ENCODE measurements at regions of chr16 and their contacts with region 1.

Region 1: GRCh38 chr16:88662843-88663606 is at the start of gene MVD:
- DNase-seq: peak; percentile 98
- ATAC-seq: peak; percentile 99
- H3K4me3 Mint-ChIP-seq: peak within 1 kb of the TSS; percentile 92
- H3K27ac Mint-ChIP-seq: peak within 1 kb of the TSS; percentile 88
- H3K4me1 Mint-ChIP-seq: peaks cover 14% of the 10 kb centered on the region
- H3K27me3 Mint-ChIP-seq: no peaks in the 10 kb centered on the region
- total RNA-seq, gene MVD: 62.8 to 81.1 TPM

Region 2: DNA sequence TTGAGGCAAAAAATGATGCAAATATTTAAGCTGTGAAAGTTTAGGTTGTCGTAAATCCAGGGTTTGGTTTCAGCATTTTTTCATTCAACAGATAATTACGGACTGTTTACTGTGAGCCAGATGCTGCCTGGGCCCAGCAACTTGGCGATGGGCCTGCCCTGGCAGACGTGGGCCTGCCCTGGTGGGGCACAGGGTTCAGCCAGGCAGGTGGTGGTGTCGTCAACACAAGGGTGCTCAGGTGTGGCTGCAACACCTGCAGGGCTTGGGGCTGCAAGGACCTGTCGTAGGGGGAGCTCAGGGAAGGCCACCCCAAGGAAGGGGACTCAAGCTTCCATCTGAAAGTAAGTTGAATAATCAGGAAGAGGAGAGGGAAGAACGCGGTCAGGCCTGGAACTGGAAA is 77.8 kb before region 1 on chr16:
- CTCF ChIA-PET with region 1: no interaction called
- POLR2A ChIA-PET with region 1: no interaction called
- intact Hi-C with region 1: no loop called
- DNase-seq: no peak
- ATAC-seq: no peak
- H3K4me3 Mint-ChIP-seq: no peak overlapping the region
- H3K27ac Mint-ChIP-seq: peak overlapping the region; percentile 45
- H3K4me1 Mint-ChIP-seq: peaks cover 51% of the 10 kb centered on the region
- H3K27me3 Mint-ChIP-seq: no peaks in the 10 kb centered on the region

Region 3: DNA sequence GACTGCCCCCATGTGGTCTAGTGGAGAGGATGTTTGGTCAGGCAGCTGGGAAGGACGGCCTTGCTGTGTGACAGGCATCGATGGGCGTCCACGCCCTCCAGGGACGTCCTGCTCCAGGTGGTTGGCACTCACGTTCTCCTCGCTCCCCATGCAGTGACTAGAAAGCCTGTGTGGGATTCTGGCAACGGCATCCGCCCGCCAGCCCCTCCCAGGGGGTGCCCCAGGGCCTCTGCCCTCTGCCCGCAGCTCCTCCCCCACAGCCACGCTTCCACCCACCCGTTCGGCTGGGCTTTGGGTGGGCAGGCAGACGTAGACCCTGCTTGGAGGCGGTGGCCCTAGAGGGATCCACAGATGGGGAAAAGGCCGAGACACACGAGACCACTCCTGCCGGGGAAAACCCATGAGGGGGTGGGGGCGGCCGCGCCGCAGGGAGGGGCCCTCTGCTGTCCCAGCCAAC is 29.3 kb before region 1 on chr16:
- CTCF ChIA-PET with region 1: no interaction called
- POLR2A ChIA-PET with region 1: no interaction called
- intact Hi-C with region 1: loop called in 1 of 2 experiments (anchors 1 kb)
- DNase-seq: peak; percentile 81
- ATAC-seq: peak; percentile 53
- H3K4me3 Mint-ChIP-seq: peak overlapping the region; percentile 56
- H3K27ac Mint-ChIP-seq: no peak overlapping the region
- H3K4me1 Mint-ChIP-seq: peaks cover 38% of the 10 kb centered on the region
- H3K27me3 Mint-ChIP-seq: peaks cover 16% of the 10 kb centered on the region

Region 4: DNA sequence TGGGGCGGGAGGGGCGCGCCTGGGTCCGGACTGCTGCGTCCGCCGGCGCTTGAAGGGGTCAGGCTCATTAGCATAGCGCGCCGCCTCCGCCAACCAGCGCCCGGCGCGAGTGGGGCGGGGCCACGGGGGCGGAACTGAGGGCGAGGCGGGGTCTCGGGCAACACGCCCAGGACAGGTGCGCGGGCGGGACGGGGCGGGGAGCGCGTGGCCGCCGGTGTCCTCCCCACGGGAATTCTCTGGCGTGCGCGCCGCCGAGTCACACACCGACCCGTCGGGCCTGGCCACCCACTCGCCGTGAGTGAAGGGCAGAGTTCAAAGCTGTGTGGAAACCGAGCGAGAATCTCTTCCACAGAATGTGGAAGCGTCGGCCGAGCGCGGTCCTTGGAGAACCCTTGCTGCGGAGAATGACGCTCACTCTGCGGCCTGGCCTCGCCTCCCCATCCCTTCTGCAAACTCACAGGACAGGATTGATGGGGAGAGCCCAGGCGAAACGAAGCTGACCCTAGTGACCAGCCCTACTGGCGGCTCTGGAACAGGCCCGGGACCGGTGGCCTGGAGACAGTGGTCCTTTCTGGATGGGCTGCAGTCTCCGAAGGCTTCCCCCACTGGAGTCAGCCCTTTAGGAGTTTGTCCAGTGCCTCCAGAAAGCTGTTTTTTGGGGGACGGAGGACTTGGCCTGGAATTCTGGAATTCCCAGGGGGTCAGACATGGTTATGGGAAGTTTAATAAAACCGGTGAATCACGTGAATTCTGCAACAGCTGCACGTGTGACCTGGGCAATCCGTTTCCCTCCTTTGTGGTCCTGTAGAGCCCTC is 23.6 kb after region 1 on chr16 and contains the start of gene SNAI3:
- CTCF ChIA-PET with region 1: interaction called, 7 read pairs
- POLR2A ChIA-PET with region 1: no interaction called
- intact Hi-C with region 1: loop called in 1 of 2 experiments (anchors 1 kb)
- DNase-seq: peak; percentile 91
- ATAC-seq: peak; percentile 69
- H3K4me3 Mint-ChIP-seq: peak within 1 kb of the TSS; percentile 70
- H3K27ac Mint-ChIP-seq: peak within 1 kb of the TSS; percentile 37
- H3K4me1 Mint-ChIP-seq: peaks cover 42% of the 10 kb centered on the region
- H3K27me3 Mint-ChIP-seq: no peaks in the 10 kb centered on the region
- total RNA-seq, gene SNAI3: 3.6 to 4.1 TPM

Region 5: GRCh38 chr16:88700636-88701482 is 37.8 kb after region 1 on chr16:
- CTCF ChIA-PET with region 1: interaction called, 5 read pairs
- POLR2A ChIA-PET with region 1: interaction called, 7 read pairs
- intact Hi-C with region 1: loop called (anchors 1 kb)
- DNase-seq: peak; percentile 98
- ATAC-seq: peak; percentile 80
- H3K4me3 Mint-ChIP-seq: peak overlapping the region; percentile 92
- H3K27ac Mint-ChIP-seq: peak overlapping the region; percentile 97
- H3K4me1 Mint-ChIP-seq: peaks cover 55% of the 10 kb centered on the region
- H3K27me3 Mint-ChIP-seq: no peaks in the 10 kb centered on the region

Region 6: DNA sequence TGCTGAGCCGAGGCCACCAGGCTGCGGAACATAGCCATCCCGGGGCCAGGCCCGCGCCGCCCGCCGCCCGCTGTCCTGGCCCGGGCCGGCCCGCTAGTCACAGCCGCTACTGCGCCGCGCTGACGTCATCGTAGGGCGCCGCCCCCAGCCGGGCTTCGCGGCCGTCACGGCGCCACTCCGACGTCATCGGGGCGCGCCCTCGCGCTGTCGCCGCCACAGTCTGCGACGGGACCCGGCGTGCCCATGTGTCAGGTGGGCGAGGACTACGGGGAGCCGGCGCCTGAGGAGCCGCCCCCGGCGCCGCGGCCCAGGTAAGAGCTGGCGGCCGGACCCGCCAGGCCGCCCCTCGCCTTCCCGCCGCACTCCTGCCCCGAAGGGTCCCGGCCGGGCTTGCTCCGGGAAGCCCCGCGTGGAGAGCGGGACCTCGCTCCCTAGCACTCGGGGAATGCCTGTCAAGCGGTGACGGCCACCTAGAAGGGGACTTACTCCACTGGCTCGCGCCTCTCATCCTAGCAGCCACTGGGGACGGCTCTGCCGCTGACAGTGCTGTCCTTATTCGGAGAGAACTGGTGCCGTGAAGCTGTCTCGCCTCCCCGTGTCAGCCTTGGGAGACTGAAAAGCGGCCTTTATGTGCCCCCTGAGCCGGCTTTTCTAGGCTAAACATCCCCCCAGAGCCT is 43.4 kb after region 1 on chr16 and contains the starts of genes CTU2 and RNF166:
- CTCF ChIA-PET with region 1: interaction called, 5 read pairs
- POLR2A ChIA-PET with region 1: interaction called, 7 read pairs
- intact Hi-C with region 1: loop called (anchors 1 kb)
- DNase-seq: peak; percentile 96
- ATAC-seq: peak; percentile 59
- H3K4me3 Mint-ChIP-seq: peak within 1 kb of the TSS; percentile 92
- H3K27ac Mint-ChIP-seq: peak within 1 kb of the TSS; percentile 92
- H3K4me1 Mint-ChIP-seq: peaks cover 43% of the 10 kb centered on the region
- H3K27me3 Mint-ChIP-seq: no peaks in the 10 kb centered on the region
- total RNA-seq, gene CTU2: 29.6 to 36.2 TPM
- total RNA-seq, gene RNF166: 44.0 to 49.7 TPM

Region 7: GRCh38 chr16:88811769-88812512 is 148.9 kb after region 1 on chr16 and contains the start of gene APRT:
- CTCF ChIA-PET with region 1: no interaction called
- POLR2A ChIA-PET with region 1: no interaction called
- intact Hi-C with region 1: loop called in 1 of 2 experiments (anchors 1 kb)
- DNase-seq: peak; percentile 99
- ATAC-seq: peak; percentile 76
- H3K4me3 Mint-ChIP-seq: peak within 1 kb of the TSS; percentile 86
- H3K27ac Mint-ChIP-seq: peak within 1 kb of the TSS; percentile 94
- H3K4me1 Mint-ChIP-seq: peaks cover 22% of the 10 kb centered on the region
- H3K27me3 Mint-ChIP-seq: no peaks in the 10 kb centered on the region
- total RNA-seq, gene APRT: 105 to 179 TPM

Measured in activated CD4-positive, alpha-beta T cell treated with anti-CD3 and anti-CD28 coated beads for 36 hours (primary cell).